ENCODE measurements at regions of chr5 and their contacts with region 1.

Region 1: DNA sequence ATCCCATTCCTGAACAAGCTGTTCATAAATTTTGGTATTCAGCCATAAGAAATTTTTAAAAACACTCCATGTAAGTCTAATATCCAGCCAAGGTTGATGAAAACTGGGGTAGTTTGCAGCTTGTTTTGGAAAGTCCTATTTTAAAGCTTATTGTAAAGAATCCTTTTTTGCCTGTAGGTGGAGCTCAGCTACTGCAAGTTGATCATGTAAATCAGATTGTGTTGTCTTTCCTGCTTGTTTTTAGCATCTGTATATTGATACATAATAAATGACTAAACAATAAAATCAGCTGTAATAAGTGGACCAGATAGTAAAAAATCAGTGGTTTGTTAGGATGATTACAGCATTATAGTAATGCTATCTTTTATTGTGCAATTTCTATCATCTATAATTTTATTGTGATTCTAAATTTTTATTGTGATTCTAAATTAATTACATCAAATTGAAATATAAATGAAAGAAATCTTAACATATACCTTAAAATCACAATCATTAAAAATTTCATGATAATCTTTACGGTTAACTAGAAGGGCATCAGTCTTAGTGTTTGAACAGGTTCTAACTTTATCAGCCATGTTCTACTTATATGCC is 42.4 kb downstream of the CWC27 start:
- DNase-seq: no peak
- ATAC-seq: peak; percentile 71

Region 2: DNA sequence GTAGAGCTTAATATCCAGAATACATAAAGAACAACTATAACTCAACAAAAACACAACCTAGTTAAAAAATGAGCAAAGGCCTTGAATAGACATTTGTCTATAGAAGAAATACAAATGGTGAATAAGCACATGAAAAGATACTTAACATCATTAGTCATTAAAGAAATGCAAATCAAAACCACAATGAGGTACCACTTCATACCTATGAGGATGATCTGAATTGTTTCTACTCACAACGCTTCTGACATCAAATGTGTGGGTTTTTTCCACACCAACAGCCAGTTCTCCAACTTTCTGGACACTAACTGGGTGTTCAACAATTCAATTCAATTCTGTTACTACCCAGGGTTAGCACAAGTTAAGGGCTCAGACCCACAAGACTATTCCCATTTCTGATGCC is 64.7 kb before region 1 on chr5:
- intact Hi-C with region 1: no loop called
- DNase-seq: no peak
- ATAC-seq: no peak

Region 3: GRCh38 chr5:65035211-65036206 is 224.4 kb after region 1 on chr5:
- intact Hi-C with region 1: loop called (anchors 10 kb)
- DNase-seq: peak; percentile 93
- ATAC-seq: peak; percentile 98

Region 4: DNA sequence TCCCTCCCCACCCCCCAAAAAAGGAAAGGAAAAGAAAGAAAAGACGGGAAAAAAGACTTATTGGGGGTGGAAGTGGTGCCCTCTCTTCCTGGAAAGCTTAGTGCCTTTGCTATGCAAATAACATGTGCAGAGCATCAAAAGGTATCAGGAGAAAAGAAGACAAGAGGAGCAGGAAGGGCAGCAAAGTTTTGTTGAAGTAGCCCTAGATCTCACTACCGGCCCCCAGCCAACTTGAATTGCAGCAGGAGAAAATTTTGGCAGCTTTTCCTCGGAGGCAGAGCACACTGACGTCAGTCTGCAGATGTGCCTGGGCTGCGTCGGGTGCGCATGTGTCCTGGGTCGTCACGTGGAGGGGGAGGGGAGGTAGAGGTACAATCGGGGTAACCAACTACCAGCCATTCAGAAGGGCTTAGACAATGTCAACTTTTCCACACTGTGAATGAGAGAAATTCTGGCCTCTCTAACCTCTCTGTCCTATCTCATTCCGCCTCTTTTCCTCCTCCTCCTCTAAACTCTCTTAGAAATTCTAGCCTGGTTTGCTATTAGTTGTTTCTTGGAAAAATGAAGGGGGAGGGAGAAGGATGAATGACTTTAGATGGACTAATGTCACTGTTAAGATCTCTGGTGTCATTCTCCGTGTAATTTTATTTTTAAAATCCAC is 670.6 kb after region 1 on chr5 and contains the start of gene ADAMTS6:
- intact Hi-C with region 1: loop called (anchors 5 kb)
- DNase-seq: peak; percentile 94
- ATAC-seq: peak; percentile 95
- total RNA-seq, gene ADAMTS6: 0.78 TPM